Activated CD4-positive, alpha-beta memory T cell treated with anti-CD3 and anti-CD28 coated beads for 36 hours (primary cell): ENCODE measurements at regions of chr7 and their contacts with region 1.

Region 1: DNA sequence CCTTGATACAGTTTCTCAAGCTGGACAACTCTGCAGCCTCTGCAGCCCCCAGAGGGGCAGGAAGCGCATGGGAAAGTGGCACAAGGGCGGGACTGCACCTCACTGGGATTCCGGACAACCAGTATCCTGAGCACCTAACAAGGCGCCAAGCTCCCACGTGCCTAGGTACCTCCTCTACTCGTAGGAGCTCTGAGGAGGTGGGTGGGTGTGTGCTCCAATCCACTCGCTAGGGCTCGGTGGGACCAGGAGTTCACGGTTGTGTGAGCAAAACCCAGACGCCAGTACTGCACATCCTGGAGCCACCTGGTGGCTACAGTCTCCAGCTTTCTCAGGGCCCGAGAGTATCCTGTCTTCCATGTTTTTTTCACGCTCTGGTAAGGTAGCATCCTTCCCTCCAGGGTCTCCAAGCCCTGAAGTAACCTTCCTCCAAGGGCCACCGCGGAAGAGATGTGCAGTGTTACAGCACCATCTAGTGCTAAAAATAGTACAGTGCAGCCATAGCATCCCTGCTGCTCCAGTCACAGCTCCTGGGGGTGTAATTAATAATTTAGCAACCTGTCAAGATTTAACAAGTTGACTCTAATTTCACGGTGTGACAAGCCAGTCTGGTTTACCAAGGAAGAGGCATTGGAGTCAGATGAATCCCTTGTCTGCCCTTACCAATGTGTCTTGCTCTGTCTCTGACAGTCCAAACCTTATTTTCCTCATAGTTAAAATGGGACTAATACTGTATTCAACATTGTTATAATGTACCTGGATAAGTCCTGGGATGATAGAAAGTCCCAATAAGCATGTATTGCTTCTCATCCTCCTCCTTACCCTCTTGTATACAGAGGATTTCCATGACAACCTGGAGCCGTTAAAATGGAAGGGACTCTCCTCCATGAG is 70.4 kb downstream of the HERPUD2 start:
- DNase-seq: peak; percentile 48
- H3K4me3 Mint-ChIP-seq: no peak overlapping the region
- H3K27ac Mint-ChIP-seq: no peak overlapping the region
- H3K4me1 Mint-ChIP-seq: peaks cover 2% of the 10 kb centered on the region
- H3K27me3 Mint-ChIP-seq: no peaks in the 10 kb centered on the region

Region 2: GRCh38 chr7:35424869-35425495 is 199.6 kb before region 1 on chr7:
- CTCF ChIA-PET with region 1: interaction called, 10 read pairs
- POLR2A ChIA-PET with region 1: no interaction called
- intact Hi-C with region 1: loop called (anchors 1 kb)
- DNase-seq: peak; percentile 64
- H3K4me3 Mint-ChIP-seq: no peak overlapping the region
- H3K27ac Mint-ChIP-seq: no peak overlapping the region
- H3K4me1 Mint-ChIP-seq: no peaks in the 10 kb centered on the region
- H3K27me3 Mint-ChIP-seq: peaks cover 7% of the 10 kb centered on the region

Region 3: DNA sequence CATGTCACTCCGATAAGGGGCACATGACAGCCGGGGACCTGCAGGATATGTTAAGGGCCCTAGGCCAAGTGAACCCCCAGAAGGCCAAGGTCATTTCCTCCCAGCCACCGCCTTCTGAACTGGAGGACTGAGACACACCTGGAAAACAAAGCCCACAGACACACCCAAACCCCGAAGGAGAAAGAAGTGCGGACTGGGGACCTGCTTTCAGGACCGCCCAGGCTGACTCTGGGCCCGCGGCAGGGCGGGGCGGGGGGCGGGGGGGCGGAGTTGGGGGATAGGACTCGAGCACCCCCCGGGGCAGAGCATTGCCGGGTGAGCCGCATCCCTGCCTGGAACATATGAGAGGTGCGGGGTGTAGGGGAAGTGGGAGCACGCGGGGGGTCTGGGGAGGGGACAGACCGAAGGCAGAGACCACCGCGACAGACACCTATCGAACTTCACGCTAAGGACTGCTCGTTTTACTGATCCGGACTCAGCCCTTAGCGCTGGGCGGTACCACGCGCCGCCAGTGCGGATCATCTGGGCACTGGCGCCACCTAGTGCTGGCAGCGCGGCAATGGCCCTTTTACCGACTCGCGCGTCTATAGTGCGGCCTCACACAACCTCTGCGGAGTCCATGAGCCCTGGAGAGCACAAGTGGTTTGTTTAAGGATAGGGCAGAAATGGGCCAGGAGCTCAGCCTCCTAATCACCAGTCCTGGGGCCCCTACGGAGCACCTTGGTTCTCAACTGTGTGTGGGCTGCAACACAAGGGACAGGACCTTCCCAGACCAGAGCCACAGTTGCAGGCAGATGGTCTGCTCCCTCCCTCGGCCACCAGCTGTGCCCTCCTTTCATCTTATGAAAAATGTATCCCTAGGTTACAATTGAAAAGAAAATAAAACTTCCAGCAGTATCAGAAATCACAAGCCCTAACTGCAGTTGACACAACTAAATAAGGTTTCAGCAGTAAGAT is 87.2 kb before region 1 on chr7:
- CTCF ChIA-PET with region 1: interaction called, 13 read pairs
- POLR2A ChIA-PET with region 1: no interaction called
- intact Hi-C with region 1: loop called (anchors 2 kb)
- DNase-seq: peak; percentile 80
- H3K4me3 Mint-ChIP-seq: peak overlapping the region; percentile 61
- H3K27ac Mint-ChIP-seq: no peak overlapping the region
- H3K4me1 Mint-ChIP-seq: peaks cover 2% of the 10 kb centered on the region
- H3K27me3 Mint-ChIP-seq: peaks cover 7% of the 10 kb centered on the region

Region 4: GRCh38 chr7:35647171-35647574 is 22.6 kb after region 1 on chr7:
- CTCF ChIA-PET with region 1: interaction called, 37 read pairs
- POLR2A ChIA-PET with region 1: no interaction called
- intact Hi-C with region 1: no loop called
- DNase-seq: no peak
- H3K4me3 Mint-ChIP-seq: no peak overlapping the region
- H3K27ac Mint-ChIP-seq: peak overlapping the region; percentile 10
- H3K4me1 Mint-ChIP-seq: peaks cover 58% of the 10 kb centered on the region
- H3K27me3 Mint-ChIP-seq: no peaks in the 10 kb centered on the region